Esophagus muscularis mucosa (tissue), 4 donors: ENCODE measurements at regions of chr11 and their contacts with region 1.

Region 1: DNA sequence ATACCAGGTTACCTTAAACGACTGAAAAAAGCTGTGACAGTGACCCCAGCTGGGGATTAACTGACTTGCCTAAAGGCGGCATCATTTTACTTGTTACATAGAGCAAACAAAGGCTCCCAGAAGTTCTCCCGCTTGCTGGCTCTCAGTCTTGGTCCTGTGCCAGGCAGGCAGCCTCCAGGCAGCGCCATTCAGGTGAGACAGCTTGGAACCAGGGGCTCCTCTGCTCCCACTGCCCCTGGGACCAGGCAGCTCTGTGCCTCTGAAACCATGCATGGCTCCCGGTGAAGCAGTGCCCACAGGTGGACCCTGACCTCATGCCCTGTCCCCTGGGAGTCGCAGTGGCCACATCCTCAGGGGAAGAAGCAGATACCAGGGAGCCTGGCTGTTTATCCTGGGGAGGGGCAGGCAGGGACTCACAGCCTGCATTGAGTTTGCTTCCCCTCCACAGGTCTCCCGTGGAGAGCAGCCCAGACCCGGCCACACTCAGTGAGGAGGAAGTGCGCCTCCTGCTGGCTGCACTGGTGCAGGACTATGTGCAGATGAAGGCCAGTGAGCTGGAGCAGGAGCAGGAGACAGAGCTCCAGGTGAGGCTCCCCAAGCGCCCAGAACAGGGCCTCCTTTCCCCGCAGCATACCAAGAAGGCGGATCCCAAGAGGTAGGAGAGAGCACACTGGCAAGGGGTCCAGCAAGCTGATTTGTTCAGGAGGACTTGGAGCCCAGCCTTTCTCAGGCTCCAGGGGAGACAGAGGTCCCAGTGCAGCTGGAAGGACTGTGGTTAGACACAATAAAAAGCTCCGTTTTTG is 15.6 kb upstream of the CYP2R1 start:
- DNase-seq: peak; percentile 94
- H3K4me3 ChIP-seq: no peak overlapping the region
- H3K27ac ChIP-seq: no peak overlapping the region
- H3K4me1 ChIP-seq: peaks cover 7 to 31% (median 22%) of the 10 kb centered on the region in 4 donors
- H3K27me3 ChIP-seq: no peaks in the 10 kb centered on the region
- CTCF ChIP-seq: peak; percentile 60 to 83 (median 63)
- EP300 ChIP-seq: no peak
- POLR2A ChIP-seq: no peak

Region 2: GRCh38 chr11:14789879-14790484 is 117.6 kb before region 1 on chr11:
- intact Hi-C with region 1: loop called (anchors 5 kb)
- DNase-seq: no peak
- H3K4me3 ChIP-seq: no peak overlapping the region
- H3K27ac ChIP-seq: no peak overlapping the region
- H3K4me1 ChIP-seq: no peaks in the 10 kb centered on the region
- H3K27me3 ChIP-seq: no peaks in the 10 kb centered on the region
- CTCF ChIP-seq: peak in 2 of 3 experiments; percentile 25 to 46
- EP300 ChIP-seq: no peak
- POLR2A ChIP-seq: no peak

Region 3: DNA sequence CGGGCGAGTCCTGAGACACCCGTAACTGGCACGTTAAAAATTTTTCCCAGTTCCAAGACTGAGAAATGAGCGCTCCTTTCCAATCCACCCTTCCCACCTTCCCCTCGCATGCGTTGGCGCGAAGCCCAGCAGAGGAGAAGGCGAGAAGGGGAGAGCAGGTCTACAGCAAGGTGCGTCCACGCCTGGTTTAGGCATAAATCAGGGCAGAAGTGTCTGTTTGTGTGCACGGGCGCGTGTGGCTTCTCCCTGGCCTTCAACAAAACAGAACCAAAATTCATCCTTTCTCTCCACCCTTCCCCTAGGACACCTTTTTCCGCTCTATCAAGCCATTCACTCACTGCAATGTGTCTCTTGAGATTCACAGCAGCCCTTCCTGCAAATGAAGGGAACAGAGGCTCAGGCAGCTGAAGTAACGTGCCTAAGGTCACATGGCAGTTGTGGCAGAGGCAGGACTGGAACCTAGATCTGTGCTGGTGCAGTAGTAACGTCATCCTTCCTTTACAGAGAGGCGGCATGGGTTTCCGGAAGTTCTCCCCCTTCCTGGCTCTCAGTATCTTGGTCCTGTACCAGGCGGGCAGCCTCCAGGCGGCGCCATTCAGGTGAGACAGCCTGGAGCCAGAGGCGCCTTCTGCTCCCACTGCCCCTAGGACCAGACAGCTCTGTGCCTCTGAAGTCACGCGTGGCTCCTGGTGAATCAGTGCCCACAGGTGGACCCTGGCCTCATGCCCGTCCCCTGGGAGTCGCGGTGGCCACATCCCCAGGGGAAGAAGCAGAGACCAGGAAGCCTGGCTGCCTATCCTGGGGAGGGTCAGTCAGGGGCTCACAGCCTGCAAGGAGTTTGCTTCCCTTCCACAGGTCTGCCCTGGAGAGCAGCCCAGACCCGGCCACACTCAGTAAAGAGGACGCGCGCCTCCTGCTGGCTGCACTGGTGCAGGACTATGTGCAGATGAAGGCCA is 166.9 kb after region 1 on chr11:
- intact Hi-C with region 1: loop called (anchors 2 kb)
- DNase-seq: peak; percentile 95
- H3K4me3 ChIP-seq: peak overlapping the region; percentile 36 to 44 (median 42)
- H3K27ac ChIP-seq: no peak overlapping the region
- H3K4me1 ChIP-seq: peaks cover 18 to 26% (median 22%) of the 10 kb centered on the region in 4 donors
- H3K27me3 ChIP-seq: peaks cover 0 to 57% (median 35%) of the 10 kb centered on the region in 4 donors
- CTCF ChIP-seq: peak; percentile 55 to 67 (median 59)
- EP300 ChIP-seq: no peak
- POLR2A ChIP-seq: no peak

Region 4: DNA sequence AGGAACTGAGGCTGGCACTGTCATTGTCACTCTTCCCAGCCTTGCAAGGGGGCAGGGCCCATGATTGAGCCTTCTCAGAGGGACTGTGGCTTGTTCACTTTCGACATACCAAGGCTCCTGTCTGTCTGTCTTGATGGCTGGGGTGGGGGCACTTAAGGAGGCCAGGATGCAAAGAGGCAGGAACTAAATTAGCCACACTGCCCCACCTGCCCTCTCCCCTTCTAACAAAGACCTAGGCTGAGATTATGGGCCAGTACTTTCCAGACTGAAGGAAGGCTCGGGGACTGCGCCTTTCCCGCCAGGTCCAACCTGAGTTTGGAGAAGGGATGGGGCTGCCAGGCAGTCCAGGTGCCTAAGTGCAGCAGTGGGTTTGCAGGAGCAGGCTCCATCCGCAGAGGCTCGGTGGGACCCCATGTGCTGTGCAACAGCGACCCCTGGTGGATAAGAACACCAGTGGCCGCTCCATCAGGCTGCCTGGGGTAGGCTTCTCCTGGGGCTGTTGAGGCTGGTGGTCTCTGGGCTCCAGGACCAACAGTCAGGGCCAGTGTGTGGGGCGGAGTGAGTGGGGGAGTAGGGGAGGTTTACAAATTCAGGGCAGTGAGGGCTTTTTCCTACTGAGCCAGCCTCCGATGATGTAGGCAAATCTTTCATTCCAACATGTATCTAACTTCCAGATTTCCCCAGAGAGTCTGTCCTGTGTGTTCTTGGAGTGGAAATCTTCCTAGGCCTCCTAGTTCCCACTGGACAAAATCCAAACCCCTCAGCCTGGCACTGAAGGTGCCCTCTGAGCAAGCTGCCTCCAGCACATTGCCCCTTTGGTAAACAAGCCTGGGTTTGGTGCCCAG is 301.0 kb after region 1 on chr11:
- intact Hi-C with region 1: loop called (anchors 5 kb)
- DNase-seq: no peak
- H3K4me3 ChIP-seq: no peak overlapping the region
- H3K27ac ChIP-seq: no peak overlapping the region
- H3K4me1 ChIP-seq: peaks cover 0 to 5% (median 0%) of the 10 kb centered on the region in 4 donors
- H3K27me3 ChIP-seq: no peaks in the 10 kb centered on the region
- CTCF ChIP-seq: peak; percentile 78 to 93 (median 90)
- EP300 ChIP-seq: no peak
- POLR2A ChIP-seq: no peak